ENCODE measurements at regions of chr1 and their contacts with region 1.

Region 1: GRCh38 chr1:109984456-109985275 is at the start of gene AHCYL1:
- DNase-seq: peak; percentile 99
- H3K4me3 ChIP-seq: peak within 1 kb of the TSS; percentile 65 to 88
- H3K27ac ChIP-seq: peak within 1 kb of the TSS; percentile 97
- H3K4me1 ChIP-seq: no peaks in the 10 kb centered on the region
- H3K27me3 ChIP-seq: no peaks in the 10 kb centered on the region
- CTCF ChIP-seq: peak; percentile 96 to 99 (median 99)
- POLR2A ChIP-seq: peak; percentile 99
- total RNA-seq, gene AHCYL1: 51.2 to 183 (median 70.2) TPM

Region 2: DNA sequence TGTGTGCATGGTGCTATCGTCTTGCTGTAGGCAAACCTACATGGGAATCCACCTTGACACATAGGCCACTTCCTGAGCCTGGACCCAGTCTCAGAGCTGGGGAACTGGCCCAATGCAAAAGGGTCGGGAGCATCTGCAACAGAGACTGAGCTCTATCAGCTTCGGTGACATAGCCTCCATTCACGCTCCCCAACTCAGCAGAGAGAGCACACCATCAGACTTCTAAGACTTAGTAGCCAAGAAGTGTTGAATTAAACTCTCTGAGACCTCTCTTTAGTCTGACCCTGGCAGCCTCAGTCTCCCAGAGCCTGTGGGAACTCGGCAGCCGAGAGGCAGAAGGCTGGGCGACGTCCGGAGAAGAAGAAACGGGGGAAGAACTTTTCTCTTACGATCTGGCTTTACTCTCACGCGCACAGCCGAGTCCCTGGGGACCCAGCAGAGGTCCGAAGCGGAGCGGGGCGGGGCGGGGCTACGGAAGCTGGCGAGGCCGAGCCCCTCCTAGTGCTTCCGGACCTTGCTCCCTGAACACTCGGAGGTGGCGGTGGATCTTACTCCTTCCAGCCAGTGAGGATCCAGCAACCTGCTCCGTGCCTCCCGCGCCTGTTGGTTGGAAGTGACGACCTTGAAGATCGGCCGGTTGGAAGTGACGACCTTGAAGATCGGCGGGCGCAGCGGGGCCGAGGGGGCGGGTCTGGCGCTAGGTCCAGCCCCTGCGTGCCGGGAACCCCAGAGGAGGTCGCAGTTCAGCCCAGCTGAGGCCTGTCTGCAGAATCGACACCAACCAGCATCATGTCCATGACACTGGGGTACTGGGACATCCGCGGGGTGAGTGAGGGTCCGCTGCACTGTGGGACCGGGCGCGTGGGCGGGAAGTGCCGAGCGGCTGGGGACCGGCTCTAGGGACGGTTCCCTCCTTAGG is 328.8 kb before region 1 on chr1 and contains the start of gene GSTM4:
- intact Hi-C with region 1: loop called (anchors 10 kb)
- DNase-seq: peak; percentile 88
- H3K4me3 ChIP-seq: peak within 1 kb of the TSS; percentile 48 to 54
- H3K27ac ChIP-seq: peak within 1 kb of the TSS; percentile 82 to 88
- H3K4me1 ChIP-seq: no peaks in the 10 kb centered on the region
- H3K27me3 ChIP-seq: no peaks in the 10 kb centered on the region
- CTCF ChIP-seq: peak; percentile 13 to 35 (median 20)
- POLR2A ChIP-seq: peak in 1 of 2 donors; percentile 43
- total RNA-seq, gene GSTM4: 7.6 to 43.5 (median 20.7) TPM